Activated T-helper 2 cell treated with anti-CD3 and anti-CD28 coated beads, Interferon-gamma antibody, Interleukin-2, Interleukin-4, amounts not matched to agents 10 μg/mL and 5 μg/mL and 100 μg/mL, durations not matched to agents 14 hours and 24 hours and 36 hours (primary cell): ENCODE measurements at regions of chr2 and their contacts with region 1.

Region 1: DNA sequence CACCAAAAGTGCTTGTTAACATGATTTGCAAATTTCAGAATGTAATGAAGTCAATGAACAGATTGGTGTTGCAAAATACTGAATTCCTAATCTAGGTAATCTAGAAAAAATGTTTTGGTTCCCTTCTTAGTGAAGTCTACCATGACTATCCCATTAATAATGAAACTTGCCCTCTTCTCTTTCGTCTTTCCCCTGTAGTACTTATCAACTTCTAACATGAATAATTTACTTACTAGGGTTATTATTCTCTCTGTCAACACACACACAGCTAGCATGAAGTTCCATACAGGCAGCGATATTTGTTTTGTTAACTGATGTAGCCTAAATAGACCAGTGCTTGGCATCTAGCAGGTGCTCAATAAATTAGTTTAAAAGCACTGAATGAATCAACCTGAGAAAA is 160.2 kb downstream of the NCK2 start:
- DNase-seq: no peak
- H3K4me3 Mint-ChIP-seq: no peak overlapping the region
- H3K27ac Mint-ChIP-seq: no peak overlapping the region
- H3K4me1 Mint-ChIP-seq: peaks cover 44% of the 10 kb centered on the region
- H3K27me3 Mint-ChIP-seq: no peaks in the 10 kb centered on the region

Region 2: GRCh38 chr2:105873721-105874120 is 31.2 kb before region 1 on chr2:
- intact Hi-C with region 1: loop called (anchors 5 kb)
- DNase-seq: peak; percentile 18
- H3K4me3 Mint-ChIP-seq: peak overlapping the region; percentile 34
- H3K27ac Mint-ChIP-seq: peak overlapping the region; percentile 91
- H3K4me1 Mint-ChIP-seq: peaks cover 73% of the 10 kb centered on the region
- H3K27me3 Mint-ChIP-seq: no peaks in the 10 kb centered on the region

Region 3: GRCh38 chr2:105888625-105889400 is 16.1 kb before region 1 on chr2:
- intact Hi-C with region 1: loop called (anchors 2 kb)
- DNase-seq: no peak
- H3K4me3 Mint-ChIP-seq: no peak overlapping the region
- H3K27ac Mint-ChIP-seq: no peak overlapping the region
- H3K4me1 Mint-ChIP-seq: peaks cover 48% of the 10 kb centered on the region
- H3K27me3 Mint-ChIP-seq: no peaks in the 10 kb centered on the region